PC-3 (cell line): ENCODE measurements at regions of chr1 and their contacts with region 1.

Region 1: GRCh38 chr1:215992620-215993019 is 425.5 kb downstream of the KCTD3 start:
- DNase-seq: peak; percentile 72
- ATAC-seq: peak; percentile 82
- H3K4me3 ChIP-seq: no peak overlapping the region
- H3K27ac ChIP-seq: no peak overlapping the region
- H3K4me1 ChIP-seq: no peaks in the 10 kb centered on the region
- H3K27me3 ChIP-seq: peaks cover 58% of the 10 kb centered on the region
- CTCF ChIP-seq: peak; percentile 83

Region 2: GRCh38 chr1:216140730-216141524 is 148.3 kb after region 1 on chr1:
- CTCF ChIA-PET with region 1: no interaction called
- POLR2A ChIA-PET with region 1: no interaction called
- intact Hi-C with region 1: no loop called
- DNase-seq: no peak
- ATAC-seq: no peak
- H3K4me3 ChIP-seq: no peak overlapping the region
- H3K27ac ChIP-seq: no peak overlapping the region
- H3K4me1 ChIP-seq: no peaks in the 10 kb centered on the region
- H3K27me3 ChIP-seq: peaks cover 58% of the 10 kb centered on the region
- CTCF ChIP-seq: no peak

Region 3: DNA sequence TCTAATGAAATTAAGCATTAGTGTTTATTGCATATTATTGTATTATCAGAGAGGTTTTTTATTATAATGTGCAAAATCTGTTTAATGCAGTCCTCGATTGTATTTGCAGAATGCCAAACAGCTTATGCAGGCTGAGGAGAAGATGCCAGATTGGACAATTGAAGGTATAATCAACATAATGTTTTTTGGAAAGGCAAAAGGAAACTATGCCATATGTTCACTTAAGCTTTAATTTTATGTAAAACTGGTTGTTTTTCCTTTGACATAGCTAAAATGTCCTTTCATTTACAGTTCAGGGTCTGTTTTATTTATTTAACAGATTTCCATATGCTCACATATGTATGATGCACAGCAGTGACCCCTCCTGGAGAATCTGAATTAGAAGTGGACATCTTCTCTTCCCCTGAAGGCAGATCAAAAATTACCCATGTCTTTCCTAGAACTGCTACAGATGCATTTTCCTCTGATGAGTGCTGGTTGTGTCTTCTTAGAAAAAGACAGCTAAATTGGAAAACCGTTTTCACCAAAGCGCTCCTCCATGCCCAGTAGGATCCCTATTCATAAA is 574.1 kb after region 1 on chr1:
- CTCF ChIA-PET with region 1: no interaction called
- POLR2A ChIA-PET with region 1: no interaction called
- intact Hi-C with region 1: loop called (anchors 1 kb)
- DNase-seq: peak; percentile 82
- ATAC-seq: peak; percentile 85
- H3K4me3 ChIP-seq: no peak overlapping the region
- H3K27ac ChIP-seq: no peak overlapping the region
- H3K4me1 ChIP-seq: no peaks in the 10 kb centered on the region
- H3K27me3 ChIP-seq: peaks cover 27% of the 10 kb centered on the region
- CTCF ChIP-seq: peak; percentile 95